Psoas muscle (tissue), 8 donors: ENCODE measurements at regions of chr3 and their contacts with region 1.

Region 1: GRCh38 chr3:157913741-157914150 is 192.5 kb downstream of the SHOX2 start:
- DNase-seq: no peak
- ATAC-seq: no peak
- H3K4me3 ChIP-seq: no peak overlapping the region
- H3K27ac ChIP-seq: no peak overlapping the region
- H3K4me1 ChIP-seq: no peaks in the 10 kb centered on the region
- H3K27me3 ChIP-seq: peaks cover 0 to 3% (median 0%) of the 10 kb centered on the region in 3 donors
- CTCF ChIP-seq: no peak

Region 2: GRCh38 chr3:157624801-157625200 is 288.9 kb before region 1 on chr3:
- intact Hi-C with region 1: loop called in 1 of 2 experiments (anchors 5 kb)
- DNase-seq: no peak
- ATAC-seq: no peak
- H3K4me3 ChIP-seq: no peak overlapping the region
- H3K27ac ChIP-seq: no peak overlapping the region
- H3K4me1 ChIP-seq: no peaks in the 10 kb centered on the region
- H3K27me3 ChIP-seq: no peaks in the 10 kb centered on the region
- CTCF ChIP-seq: no peak